Psoas muscle (tissue), 8 donors: ENCODE measurements at regions of chr12 and their contacts with region 1.

Region 1: DNA sequence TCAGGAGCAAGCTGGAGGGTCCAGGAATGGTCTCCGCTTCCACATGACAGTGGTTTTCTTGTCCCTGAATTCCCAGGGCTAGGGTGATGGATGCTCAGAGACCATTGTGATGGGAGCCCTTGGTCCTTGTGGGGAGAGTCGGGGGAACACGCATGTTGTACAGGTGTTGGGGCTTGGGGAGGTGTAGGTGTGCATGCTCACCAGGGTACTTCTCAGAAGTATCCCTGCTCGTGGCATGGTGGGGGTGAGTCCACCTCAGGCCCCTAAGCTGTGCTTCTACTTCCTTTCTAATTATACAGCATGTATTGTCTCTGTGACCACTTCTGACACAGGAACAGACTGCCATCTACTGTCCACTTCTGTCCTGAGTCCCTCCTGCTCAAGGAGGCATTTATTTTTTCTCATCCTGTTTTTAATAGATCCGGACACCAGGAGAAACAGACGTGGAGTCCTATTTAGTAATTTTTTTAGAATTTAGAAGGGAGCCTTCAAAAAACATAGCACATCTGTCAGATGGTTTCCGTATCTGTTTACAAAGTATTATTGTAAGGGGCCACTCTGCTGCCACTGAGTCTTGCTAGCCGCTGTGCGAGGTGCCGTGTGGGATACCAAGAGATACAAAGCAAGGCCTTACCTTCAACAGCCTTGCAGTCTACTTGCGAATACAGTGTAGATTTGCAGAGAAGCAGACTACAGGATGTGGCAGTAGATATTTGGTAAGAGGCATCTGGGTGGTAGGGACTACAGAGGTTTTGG is 10.5 kb downstream of the NTF3 start:
- DNase-seq: no peak
- ATAC-seq: peak; percentile 89 to 96 (median 92)
- H3K4me3 ChIP-seq: no peak overlapping the region
- H3K27ac ChIP-seq: no peak overlapping the region
- H3K4me1 ChIP-seq: peaks cover 3% of the 10 kb centered on the region
- H3K27me3 ChIP-seq: no peaks in the 10 kb centered on the region
- CTCF ChIP-seq: peak; percentile 75

Region 2: GRCh38 chr12:4857472-4858291 is 584.7 kb before region 1 on chr12:
- intact Hi-C with region 1: loop called in 1 of 2 experiments (anchors 10 kb)
- DNase-seq: peak; percentile 68 to 74
- ATAC-seq: peak; percentile 78 to 90 (median 82)
- H3K4me3 ChIP-seq: peak overlapping the region; percentile 17
- H3K27ac ChIP-seq: no peak overlapping the region
- H3K4me1 ChIP-seq: peaks cover 10% of the 10 kb centered on the region
- H3K27me3 ChIP-seq: no peaks in the 10 kb centered on the region
- CTCF ChIP-seq: peak; percentile 79

Region 3: GRCh38 chr12:5022465-5023061 is 419.9 kb before region 1 on chr12:
- intact Hi-C with region 1: loop called (anchors 2 to 5 kb)
- DNase-seq: peak in 1 of 2 donors; percentile 66
- ATAC-seq: peak; percentile 65 to 82 (median 78)
- H3K4me3 ChIP-seq: no peak overlapping the region
- H3K27ac ChIP-seq: no peak overlapping the region
- H3K4me1 ChIP-seq: no peaks in the 10 kb centered on the region
- H3K27me3 ChIP-seq: no peaks in the 10 kb centered on the region
- CTCF ChIP-seq: peak; percentile 97

Region 4: GRCh38 chr12:5096241-5096935 is 346.0 kb before region 1 on chr12:
- intact Hi-C with region 1: loop called in 1 of 2 experiments (anchors 5 kb)
- DNase-seq: no peak
- ATAC-seq: peak in 2 of 4 donors; percentile 17 to 34
- H3K4me3 ChIP-seq: no peak overlapping the region
- H3K27ac ChIP-seq: no peak overlapping the region
- H3K4me1 ChIP-seq: no peaks in the 10 kb centered on the region
- H3K27me3 ChIP-seq: peaks cover 0 to 23% (median 3%) of the 10 kb centered on the region in 3 donors
- CTCF ChIP-seq: no peak

Region 5: DNA sequence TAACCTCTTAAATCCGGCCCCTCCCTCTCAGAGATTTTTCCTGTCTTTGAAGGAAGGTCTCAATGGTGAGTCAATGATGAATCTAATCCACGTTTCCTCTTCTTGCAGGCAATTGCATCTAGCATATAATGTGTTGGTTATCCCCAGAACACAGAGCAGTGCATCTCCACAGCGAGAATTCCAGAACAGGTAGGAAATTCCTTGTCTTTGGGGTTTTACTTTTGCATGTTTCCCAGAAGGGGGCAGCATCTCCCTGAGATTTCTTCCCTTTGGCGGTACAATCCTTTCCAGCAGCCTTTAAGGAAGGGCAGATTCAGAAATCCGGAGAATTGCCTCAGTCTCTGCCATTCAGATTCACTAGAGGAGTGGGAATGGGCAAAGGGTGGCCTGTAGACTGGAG is 270.7 kb before region 1 on chr12:
- intact Hi-C with region 1: loop called in 1 of 2 experiments (anchors 2 kb)
- DNase-seq: no peak
- ATAC-seq: peak in 3 of 4 donors; percentile 34 to 62 (median 41)
- H3K4me3 ChIP-seq: no peak overlapping the region
- H3K27ac ChIP-seq: peak overlapping the region; percentile 73
- H3K4me1 ChIP-seq: peaks cover 27% of the 10 kb centered on the region
- H3K27me3 ChIP-seq: no peaks in the 10 kb centered on the region
- CTCF ChIP-seq: peak; percentile 59

Region 6: DNA sequence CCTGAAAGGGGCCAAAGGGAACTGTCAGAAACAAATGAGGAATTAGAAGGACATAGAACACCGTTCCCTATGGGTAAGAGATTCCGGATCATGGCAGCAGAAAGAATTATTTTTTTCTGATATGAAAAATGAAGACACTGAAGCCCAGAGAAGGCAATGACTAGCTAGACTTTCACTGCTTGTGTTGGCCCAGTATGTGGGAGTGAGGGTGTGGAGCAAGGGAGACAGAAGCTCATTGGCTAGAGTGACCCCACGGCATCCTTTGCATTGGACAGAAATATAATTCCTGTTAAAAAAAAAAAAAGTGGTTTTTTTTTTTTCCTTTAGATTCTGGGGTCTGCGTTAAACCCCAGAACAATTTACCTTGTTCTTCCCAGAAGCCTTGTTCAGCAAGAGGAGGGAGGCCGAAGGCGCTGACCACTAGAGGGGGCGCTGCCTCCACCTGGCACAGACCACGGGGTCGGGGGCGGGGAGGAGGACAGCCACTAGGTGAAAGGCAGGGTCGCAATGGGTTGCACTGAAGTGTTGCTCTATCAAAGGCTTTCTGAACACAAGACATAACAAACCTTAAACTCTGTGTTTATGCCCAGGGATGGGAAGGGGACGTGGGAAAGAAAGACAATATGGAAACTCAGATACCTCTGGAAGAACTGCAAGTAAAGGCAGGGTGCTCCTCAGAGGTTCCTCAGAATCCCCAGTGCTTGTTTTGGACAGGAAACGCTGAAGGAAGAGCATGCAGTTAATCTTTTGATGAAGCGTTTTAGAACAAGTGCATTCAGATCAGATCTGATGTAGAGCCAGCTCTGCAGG is 241.9 kb before region 1 on chr12:
- intact Hi-C with region 1: loop called (anchors 1 to 2 kb)
- DNase-seq: peak; percentile 50 to 74
- ATAC-seq: peak; percentile 79 to 92 (median 87)
- H3K4me3 ChIP-seq: no peak overlapping the region
- H3K27ac ChIP-seq: no peak overlapping the region
- H3K4me1 ChIP-seq: no peaks in the 10 kb centered on the region
- H3K27me3 ChIP-seq: no peaks in the 10 kb centered on the region
- CTCF ChIP-seq: peak; percentile 71

Region 7: DNA sequence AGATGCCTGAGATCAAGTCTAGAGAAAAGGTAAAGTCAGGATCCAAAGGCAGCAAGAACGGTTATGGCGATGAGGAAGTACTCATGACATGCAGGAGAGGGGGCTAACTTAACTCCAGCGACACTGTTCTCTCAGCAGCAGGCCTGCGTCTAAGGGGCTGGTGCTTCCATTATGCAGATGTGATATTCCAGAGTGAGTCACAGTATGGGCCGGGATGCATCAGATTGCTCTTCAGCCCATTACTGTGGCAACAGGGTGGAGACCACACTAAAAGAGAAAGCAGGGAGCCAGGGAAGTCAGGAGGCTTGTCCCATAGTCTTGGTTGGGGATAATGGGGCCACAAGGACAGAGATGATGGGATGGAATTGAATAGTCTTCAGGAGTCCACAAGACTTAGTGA is 162.3 kb before region 1 on chr12:
- intact Hi-C with region 1: no loop called
- DNase-seq: no peak
- ATAC-seq: no peak
- H3K4me3 ChIP-seq: no peak overlapping the region
- H3K27ac ChIP-seq: no peak overlapping the region
- H3K4me1 ChIP-seq: no peaks in the 10 kb centered on the region
- H3K27me3 ChIP-seq: peaks cover 0 to 1% (median 0%) of the 10 kb centered on the region in 3 donors
- CTCF ChIP-seq: no peak

Region 8: GRCh38 chr12:6187948-6188793 is 745.7 kb after region 1 on chr12:
- intact Hi-C with region 1: no loop called
- DNase-seq: no peak
- ATAC-seq: no peak
- H3K4me3 ChIP-seq: no peak overlapping the region
- H3K27ac ChIP-seq: no peak overlapping the region
- H3K4me1 ChIP-seq: no peaks in the 10 kb centered on the region
- H3K27me3 ChIP-seq: peaks cover 0 to 2% (median 0%) of the 10 kb centered on the region in 3 donors
- CTCF ChIP-seq: no peak